ENCODE measurements at regions of chr4 and their contacts with region 1.

Region 1: DNA sequence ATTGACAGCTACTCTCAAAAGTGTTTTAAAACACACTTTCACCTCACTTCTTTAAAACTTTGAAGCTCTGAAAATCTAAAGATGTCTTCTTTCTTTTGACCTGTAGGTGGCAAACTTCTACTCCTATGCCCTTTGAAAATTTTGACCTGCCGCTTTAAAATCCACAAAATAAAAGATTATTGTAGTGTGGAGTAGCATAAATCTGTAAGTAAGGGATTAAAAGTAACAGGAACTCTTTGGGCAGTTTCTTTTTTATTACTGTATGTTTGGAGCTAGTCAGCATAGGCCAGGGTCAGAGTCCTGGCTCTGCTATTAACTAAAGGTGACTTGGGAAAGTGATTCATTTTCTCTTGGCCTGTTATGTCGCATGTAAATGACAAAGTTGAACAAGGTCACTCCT is 25.5 kb downstream of the BBS12 start:
- DNase-seq: peak; percentile 51
- H3K4me3 Mint-ChIP-seq: no peak overlapping the region
- H3K27ac Mint-ChIP-seq: peak overlapping the region; percentile 56
- H3K4me1 Mint-ChIP-seq: peaks cover 23% of the 10 kb centered on the region
- H3K27me3 Mint-ChIP-seq: no peaks in the 10 kb centered on the region
- CTCF ChIP-seq: peak; percentile 63

Region 2: GRCh38 chr4:122744229-122744628 is 13.8 kb before region 1 on chr4:
- CTCF ChIA-PET with region 1: interaction called, 14 read pairs
- POLR2A ChIA-PET with region 1: interaction called, 3 read pairs
- intact Hi-C with region 1: no loop called
- DNase-seq: peak; percentile 76
- H3K4me3 Mint-ChIP-seq: no peak overlapping the region
- H3K27ac Mint-ChIP-seq: no peak overlapping the region
- H3K4me1 Mint-ChIP-seq: peaks cover 4% of the 10 kb centered on the region
- H3K27me3 Mint-ChIP-seq: no peaks in the 10 kb centered on the region
- CTCF ChIP-seq: no peak

Region 3: GRCh38 chr4:122798101-122798500 is 40.1 kb after region 1 on chr4:
- CTCF ChIA-PET with region 1: interaction called, 17 read pairs
- POLR2A ChIA-PET with region 1: interaction called, 3 read pairs
- intact Hi-C with region 1: no loop called
- DNase-seq: peak; percentile 90
- H3K4me3 Mint-ChIP-seq: peak overlapping the region; percentile 66
- H3K27ac Mint-ChIP-seq: peak overlapping the region; percentile 98
- H3K4me1 Mint-ChIP-seq: peaks cover 20% of the 10 kb centered on the region
- H3K27me3 Mint-ChIP-seq: no peaks in the 10 kb centered on the region
- CTCF ChIP-seq: no peak

Region 4: GRCh38 chr4:122898370-122899150 is 140.5 kb after region 1 on chr4:
- CTCF ChIA-PET with region 1: interaction called, 12 read pairs
- POLR2A ChIA-PET with region 1: interaction called, 3 read pairs
- intact Hi-C with region 1: loop called (anchors 5 kb)
- DNase-seq: peak; percentile 90
- H3K4me3 Mint-ChIP-seq: no peak overlapping the region
- H3K27ac Mint-ChIP-seq: peak overlapping the region; percentile 57
- H3K4me1 Mint-ChIP-seq: peaks cover 21% of the 10 kb centered on the region
- H3K27me3 Mint-ChIP-seq: no peaks in the 10 kb centered on the region
- CTCF ChIP-seq: no peak

Region 5: GRCh38 chr4:122922877-122923511 is 165.0 kb after region 1 on chr4:
- CTCF ChIA-PET with region 1: interaction called, 39 read pairs
- POLR2A ChIA-PET with region 1: interaction called, 8 read pairs
- intact Hi-C with region 1: no loop called
- DNase-seq: peak; percentile 86
- H3K4me3 Mint-ChIP-seq: no peak overlapping the region
- H3K27ac Mint-ChIP-seq: peak overlapping the region; percentile 74
- H3K4me1 Mint-ChIP-seq: peaks cover 5% of the 10 kb centered on the region
- H3K27me3 Mint-ChIP-seq: no peaks in the 10 kb centered on the region
- CTCF ChIP-seq: no peak